Naive thymus-derived CD4-positive, alpha-beta T cell (primary cell): ENCODE measurements at regions of chr6 and their contacts with region 1.

Region 1: DNA sequence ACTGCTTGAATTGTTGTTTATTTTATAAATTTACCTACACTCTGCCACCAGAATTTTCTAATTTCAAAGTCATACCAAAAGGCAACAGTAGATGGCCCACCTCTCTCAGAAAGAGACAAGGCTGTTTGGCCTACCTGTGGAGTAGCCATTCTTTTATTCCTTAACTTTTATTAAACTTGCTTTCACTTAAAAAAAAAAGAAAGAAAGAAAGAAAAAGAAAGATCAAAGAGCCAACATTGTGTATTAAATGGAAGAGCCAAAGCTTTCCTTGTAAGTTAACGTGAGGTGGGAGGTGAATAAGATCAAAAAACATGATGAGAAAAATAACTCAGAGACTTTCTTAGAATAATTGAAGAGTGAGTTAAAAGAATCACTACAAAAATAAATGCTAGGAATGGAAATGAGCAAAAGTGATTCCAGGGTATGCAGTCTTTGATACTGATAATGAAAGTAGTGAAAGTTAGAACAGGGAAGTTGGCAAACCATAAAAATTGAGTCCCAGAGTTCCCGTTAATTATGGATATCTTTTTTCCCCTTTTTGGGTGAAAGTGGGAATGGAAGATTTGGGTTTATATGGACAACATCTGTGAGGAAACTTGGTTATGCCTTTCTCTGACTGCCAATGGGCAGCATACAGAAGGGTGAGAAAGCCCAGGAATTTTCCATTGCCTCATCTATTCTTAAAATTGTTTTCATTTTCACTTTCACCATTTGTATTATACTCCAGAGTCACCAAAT is 35.9 kb upstream of the MYB start:
- DNase-seq: peak in 6 of 9 donors; percentile 14 to 51 (median 48)
- ATAC-seq: peak; percentile 74
- H3K4me3 ChIP-seq: peak overlapping the region; percentile 23
- H3K4me3 Mint-ChIP-seq: peak overlapping the region in 9 of 10 donors; percentile 39 to 81 (median 61)
- H3K27ac ChIP-seq: peak overlapping the region; percentile 41
- H3K27ac Mint-ChIP-seq: peak overlapping the region; percentile 54 to 91 (median 86)
- H3K4me1 ChIP-seq: peaks cover 0 to 35% of the 10 kb centered on the region in 2 donors
- H3K4me1 Mint-ChIP-seq: peaks cover 28 to 76% (median 56%) of the 10 kb centered on the region in 7 donors
- H3K27me3 ChIP-seq: no peaks in the 10 kb centered on the region
- H3K27me3 Mint-ChIP-seq: no peaks in the 10 kb centered on the region

Region 2: GRCh38 chr6:134026597-134026996 is 1118.6 kb before region 1 on chr6:
- CTCF ChIA-PET with region 1: no interaction called
- POLR2A ChIA-PET with region 1: no interaction called
- intact Hi-C with region 1: no loop called
- DNase-seq: no peak
- ATAC-seq: no peak
- H3K4me3 ChIP-seq: no peak overlapping the region
- H3K4me3 Mint-ChIP-seq: no peak overlapping the region
- H3K27ac ChIP-seq: no peak overlapping the region
- H3K27ac Mint-ChIP-seq: no peak overlapping the region
- H3K4me1 ChIP-seq: no peaks in the 10 kb centered on the region
- H3K4me1 Mint-ChIP-seq: peaks cover 0 to 4% (median 0%) of the 10 kb centered on the region in 7 donors
- H3K27me3 ChIP-seq: no peaks in the 10 kb centered on the region
- H3K27me3 Mint-ChIP-seq: peaks cover 0 to 10% (median 0%) of the 10 kb centered on the region in 5 donors

Region 3: GRCh38 chr6:135088818-135089809 is 56.1 kb before region 1 on chr6:
- CTCF ChIA-PET with region 1: interaction called, 34 read pairs
- POLR2A ChIA-PET with region 1: interaction called, 7 read pairs
- intact Hi-C with region 1: loop called (anchors 1 kb)
- DNase-seq: peak in 4 of 9 donors; percentile 24 to 52 (median 36)
- ATAC-seq: peak; percentile 73
- H3K4me3 ChIP-seq: peak overlapping the region; percentile 50
- H3K4me3 Mint-ChIP-seq: peak overlapping the region; percentile 50 to 86 (median 66)
- H3K27ac ChIP-seq: peak overlapping the region; percentile 69
- H3K27ac Mint-ChIP-seq: peak overlapping the region; percentile 72 to 98 (median 95)
- H3K4me1 ChIP-seq: peaks cover 29 to 63% of the 10 kb centered on the region in 2 donors
- H3K4me1 Mint-ChIP-seq: peaks cover 43 to 98% (median 94%) of the 10 kb centered on the region in 7 donors
- H3K27me3 ChIP-seq: no peaks in the 10 kb centered on the region
- H3K27me3 Mint-ChIP-seq: no peaks in the 10 kb centered on the region

Region 4: DNA sequence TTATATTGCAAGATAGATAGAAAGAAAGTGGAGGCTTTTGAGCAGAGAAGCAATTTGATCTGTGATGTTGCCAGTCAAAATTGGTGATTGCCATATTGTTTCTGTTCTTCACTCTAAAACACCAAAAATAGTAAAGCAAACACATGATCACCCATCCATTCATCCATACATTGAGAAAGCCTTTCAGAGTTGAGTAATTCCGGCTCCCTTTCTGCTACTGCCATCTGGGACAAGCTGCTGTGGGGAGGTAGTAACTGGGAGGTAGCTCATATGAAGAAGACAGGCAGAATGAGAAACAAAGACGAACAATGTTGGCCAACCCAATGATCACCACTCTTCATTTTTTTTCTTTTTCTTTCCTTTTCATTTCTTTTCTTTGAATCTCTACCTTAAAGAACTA is 39.5 kb before region 1 on chr6:
- CTCF ChIA-PET with region 1: interaction called, 12 read pairs
- POLR2A ChIA-PET with region 1: interaction called, 3 read pairs
- intact Hi-C with region 1: loop called in 1 of 2 experiments (anchors 1 kb)
- DNase-seq: no peak
- ATAC-seq: no peak
- H3K4me3 ChIP-seq: no peak overlapping the region
- H3K4me3 Mint-ChIP-seq: peak overlapping the region in 2 of 10 donors; percentile 8 to 83
- H3K27ac ChIP-seq: no peak overlapping the region
- H3K27ac Mint-ChIP-seq: peak overlapping the region in 8 of 9 donors; percentile 77 to 97 (median 90)
- H3K4me1 ChIP-seq: peaks cover 28 to 45% of the 10 kb centered on the region in 2 donors
- H3K4me1 Mint-ChIP-seq: peaks cover 31 to 83% (median 73%) of the 10 kb centered on the region in 7 donors
- H3K27me3 ChIP-seq: no peaks in the 10 kb centered on the region
- H3K27me3 Mint-ChIP-seq: no peaks in the 10 kb centered on the region

Region 5: GRCh38 chr6:135128268-135128914 is 16.8 kb before region 1 on chr6:
- CTCF ChIA-PET with region 1: interaction called, 18 read pairs
- POLR2A ChIA-PET with region 1: interaction called, 6 read pairs
- intact Hi-C with region 1: loop called in 1 of 2 experiments (anchors 1 kb)
- DNase-seq: peak in 8 of 9 donors; percentile 53 to 73 (median 66)
- ATAC-seq: peak; percentile 92
- H3K4me3 ChIP-seq: peak overlapping the region; percentile 36
- H3K4me3 Mint-ChIP-seq: peak overlapping the region; percentile 46 to 93 (median 77)
- H3K27ac ChIP-seq: peak overlapping the region; percentile 75
- H3K27ac Mint-ChIP-seq: peak overlapping the region; percentile 95 to 98 (median 97)
- H3K4me1 ChIP-seq: peaks cover 18 to 22% of the 10 kb centered on the region in 2 donors
- H3K4me1 Mint-ChIP-seq: peaks cover 26 to 64% (median 55%) of the 10 kb centered on the region in 7 donors
- H3K27me3 ChIP-seq: no peaks in the 10 kb centered on the region
- H3K27me3 Mint-ChIP-seq: no peaks in the 10 kb centered on the region

Region 6: GRCh38 chr6:135257631-135258405 is 112.6 kb after region 1 on chr6:
- CTCF ChIA-PET with region 1: interaction called, 7 read pairs
- POLR2A ChIA-PET with region 1: no interaction called
- intact Hi-C with region 1: loop called (anchors 1 kb)
- DNase-seq: peak in 3 of 9 donors; percentile 4 to 24 (median 12)
- ATAC-seq: no peak
- H3K4me3 ChIP-seq: no peak overlapping the region
- H3K4me3 Mint-ChIP-seq: no peak overlapping the region
- H3K27ac ChIP-seq: no peak overlapping the region
- H3K27ac Mint-ChIP-seq: no peak overlapping the region
- H3K4me1 ChIP-seq: no peaks in the 10 kb centered on the region
- H3K4me1 Mint-ChIP-seq: peaks cover 0 to 4% (median 0%) of the 10 kb centered on the region in 7 donors
- H3K27me3 ChIP-seq: no peaks in the 10 kb centered on the region
- H3K27me3 Mint-ChIP-seq: peaks cover 0 to 10% (median 7%) of the 10 kb centered on the region in 5 donors

Region 7: DNA sequence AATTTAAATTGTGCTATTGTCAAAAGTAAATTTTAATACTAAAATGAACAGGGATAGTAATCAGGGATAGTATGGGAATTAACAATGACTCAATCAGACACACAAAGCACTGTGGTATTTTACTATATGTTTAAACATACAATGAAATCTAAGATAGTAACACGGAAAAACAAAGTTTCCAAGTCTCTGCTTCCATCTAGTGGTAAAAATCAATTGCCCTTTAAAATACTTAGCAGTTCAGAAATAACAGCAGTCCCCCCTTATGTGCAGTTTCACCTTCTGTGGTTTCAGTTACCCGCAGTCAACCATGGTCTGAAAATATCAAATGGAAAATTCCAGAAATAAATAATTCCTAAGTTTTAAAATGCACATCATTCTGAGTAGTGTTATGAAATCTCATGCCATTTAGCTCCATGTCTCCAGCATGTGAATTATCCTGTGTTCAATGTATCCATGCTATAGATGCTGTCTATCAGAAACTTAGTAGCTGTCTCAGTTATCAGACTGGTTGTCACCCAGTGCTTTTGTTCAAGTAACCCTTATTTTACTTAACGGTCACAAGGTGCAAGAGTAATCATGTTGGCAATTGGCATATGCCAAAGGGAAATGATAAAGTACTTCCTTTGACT is 293.8 kb after region 1 on chr6:
- CTCF ChIA-PET with region 1: interaction called, 3 read pairs
- POLR2A ChIA-PET with region 1: no interaction called
- intact Hi-C with region 1: loop called (anchors 1 kb)
- DNase-seq: peak in 6 of 9 donors; percentile 23 to 39 (median 27)
- ATAC-seq: peak; percentile 72
- H3K4me3 ChIP-seq: no peak overlapping the region
- H3K4me3 Mint-ChIP-seq: peak overlapping the region in 8 of 10 donors; percentile 15 to 85 (median 72)
- H3K27ac ChIP-seq: no peak overlapping the region
- H3K27ac Mint-ChIP-seq: peak overlapping the region in 7 of 9 donors; percentile 7 to 87 (median 60)
- H3K4me1 ChIP-seq: peaks cover 0 to 8% of the 10 kb centered on the region in 2 donors
- H3K4me1 Mint-ChIP-seq: peaks cover 12 to 27% (median 20%) of the 10 kb centered on the region in 7 donors
- H3K27me3 ChIP-seq: no peaks in the 10 kb centered on the region
- H3K27me3 Mint-ChIP-seq: no peaks in the 10 kb centered on the region

Region 8: GRCh38 chr6:135592276-135592675 is 447.0 kb after region 1 on chr6:
- CTCF ChIA-PET with region 1: no interaction called
- POLR2A ChIA-PET with region 1: no interaction called
- intact Hi-C with region 1: no loop called
- DNase-seq: no peak
- ATAC-seq: no peak
- H3K4me3 ChIP-seq: no peak overlapping the region
- H3K4me3 Mint-ChIP-seq: no peak overlapping the region
- H3K27ac ChIP-seq: no peak overlapping the region
- H3K27ac Mint-ChIP-seq: peak overlapping the region in 1 of 9 donors; percentile 6
- H3K4me1 ChIP-seq: no peaks in the 10 kb centered on the region
- H3K4me1 Mint-ChIP-seq: peaks cover 0 to 29% (median under 1%) of the 10 kb centered on the region in 7 donors
- H3K27me3 ChIP-seq: no peaks in the 10 kb centered on the region
- H3K27me3 Mint-ChIP-seq: no peaks in the 10 kb centered on the region